CD14-positive monocyte (primary cell): ENCODE measurements at regions of chr11 and their contacts with region 1.

Region 1: GRCh38 chr11:2526808-2527381 is 82.1 kb downstream of the KCNQ1 start:
- DNase-seq: peak; percentile 78 to 84 (median 82)
- H3K4me3 ChIP-seq: peak overlapping the region; percentile 1 to 69 (median 6)
- H3K4me3 Mint-ChIP-seq: peak overlapping the region; percentile 66 to 80
- H3K27ac ChIP-seq: peak overlapping the region; percentile 49 to 82
- H3K27ac Mint-ChIP-seq: peak overlapping the region; percentile 69 to 91 (median 84)
- H3K4me1 ChIP-seq: peaks cover 40 to 43% of the 10 kb centered on the region in 2 donors
- H3K4me1 Mint-ChIP-seq: peaks cover 48% of the 10 kb centered on the region
- H3K27me3 ChIP-seq: no peaks in the 10 kb centered on the region
- H3K27me3 Mint-ChIP-seq: peaks cover 0 to 2% (median 2%) of the 10 kb centered on the region in 3 donors
- CTCF ChIP-seq: peak; percentile 72

Region 2: DNA sequence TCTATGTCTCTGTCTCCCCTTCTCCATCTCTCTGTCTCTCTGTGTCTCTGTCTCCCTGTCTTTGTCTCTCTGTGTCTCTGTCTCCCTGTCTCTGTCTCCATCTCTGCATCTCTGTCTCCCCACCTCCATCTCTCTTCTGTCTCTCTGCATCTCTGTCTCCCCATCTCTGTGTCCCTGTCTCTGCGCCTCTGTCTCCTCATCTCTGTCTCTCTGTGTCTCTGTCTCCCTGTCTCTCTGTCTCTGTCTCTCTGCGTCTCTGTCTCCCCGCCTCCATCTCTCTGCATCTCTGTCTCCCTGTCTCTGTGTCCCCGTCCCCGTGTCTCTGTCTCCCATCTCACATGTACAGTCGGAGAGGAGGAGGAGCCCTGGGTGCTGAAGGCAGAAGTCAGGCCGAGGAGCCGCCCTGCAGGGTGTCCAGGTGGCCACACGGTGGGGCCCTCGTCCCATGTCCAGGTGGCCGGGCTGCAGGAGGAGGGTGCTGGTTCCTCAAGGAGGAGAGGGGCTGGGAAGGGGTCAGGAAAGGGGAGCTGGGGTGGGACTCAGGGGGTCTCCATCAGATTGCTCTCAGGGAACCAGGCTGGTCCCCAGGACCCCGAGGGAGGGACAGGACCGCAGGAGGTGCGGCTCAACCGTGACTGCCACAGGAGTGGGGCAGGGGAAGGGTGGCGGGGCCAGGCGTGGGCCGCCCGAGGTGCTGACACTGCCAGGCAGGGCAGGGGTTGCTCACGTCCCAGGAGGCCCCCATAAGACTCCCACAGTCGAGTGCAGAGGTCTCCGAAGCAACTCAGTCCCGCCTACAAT is 329.7 kb before region 1 on chr11:
- intact Hi-C with region 1: loop called (anchors 10 kb)
- DNase-seq: peak; percentile 60 to 70 (median 67)
- H3K4me3 ChIP-seq: no peak overlapping the region
- H3K4me3 Mint-ChIP-seq: peak overlapping the region in 1 of 2 donors; percentile 62
- H3K27ac ChIP-seq: no peak overlapping the region
- H3K27ac Mint-ChIP-seq: no peak overlapping the region
- H3K4me1 ChIP-seq: peaks cover 3 to 12% of the 10 kb centered on the region in 2 donors
- H3K4me1 Mint-ChIP-seq: peaks cover 3% of the 10 kb centered on the region
- H3K27me3 ChIP-seq: peaks cover 0 to 5% of the 10 kb centered on the region in 2 donors
- H3K27me3 Mint-ChIP-seq: peaks cover 15 to 25% (median 21%) of the 10 kb centered on the region in 3 donors
- CTCF ChIP-seq: peak; percentile 77

Region 3: GRCh38 chr11:2208691-2209369 is 318.1 kb before region 1 on chr11:
- intact Hi-C with region 1: no loop called
- DNase-seq: no peak
- H3K4me3 ChIP-seq: no peak overlapping the region
- H3K4me3 Mint-ChIP-seq: no peak overlapping the region
- H3K27ac ChIP-seq: no peak overlapping the region
- H3K27ac Mint-ChIP-seq: no peak overlapping the region
- H3K4me1 ChIP-seq: peaks cover 4 to 7% of the 10 kb centered on the region in 2 donors
- H3K4me1 Mint-ChIP-seq: peaks cover 6% of the 10 kb centered on the region
- H3K27me3 ChIP-seq: no peaks in the 10 kb centered on the region
- H3K27me3 Mint-ChIP-seq: peaks cover 2 to 5% (median 4%) of the 10 kb centered on the region in 3 donors
- CTCF ChIP-seq: no peak

Region 4: GRCh38 chr11:2428322-2428795 is 98.5 kb before region 1 on chr11:
- intact Hi-C with region 1: loop called (anchors 1 kb)
- DNase-seq: peak; percentile 72 to 80 (median 74)
- H3K4me3 ChIP-seq: no peak overlapping the region
- H3K4me3 Mint-ChIP-seq: no peak overlapping the region
- H3K27ac ChIP-seq: no peak overlapping the region
- H3K27ac Mint-ChIP-seq: no peak overlapping the region
- H3K4me1 ChIP-seq: no peaks in the 10 kb centered on the region
- H3K4me1 Mint-ChIP-seq: no peaks in the 10 kb centered on the region
- H3K27me3 ChIP-seq: no peaks in the 10 kb centered on the region
- H3K27me3 Mint-ChIP-seq: peaks cover 0 to 8% (median 7%) of the 10 kb centered on the region in 3 donors
- CTCF ChIP-seq: peak; percentile 91

Region 5: GRCh38 chr11:2480874-2481220 is 46.0 kb before region 1 on chr11:
- intact Hi-C with region 1: loop called in 1 of 2 experiments (anchors 5 kb)
- DNase-seq: peak; percentile 85 to 95 (median 87)
- H3K4me3 ChIP-seq: peak overlapping the region; percentile 2 to 71 (median 34)
- H3K4me3 Mint-ChIP-seq: peak overlapping the region; percentile 11 to 80
- H3K27ac ChIP-seq: peak overlapping the region; percentile 88 to 94
- H3K27ac Mint-ChIP-seq: peak overlapping the region; percentile 90 to 99 (median 98)
- H3K4me1 ChIP-seq: peaks cover 44 to 46% of the 10 kb centered on the region in 2 donors
- H3K4me1 Mint-ChIP-seq: peaks cover 56% of the 10 kb centered on the region
- H3K27me3 ChIP-seq: no peaks in the 10 kb centered on the region
- H3K27me3 Mint-ChIP-seq: peaks cover 0 to 6% (median 5%) of the 10 kb centered on the region in 3 donors
- CTCF ChIP-seq: no peak